ENCODE measurements at regions of chr2 and their contacts with region 1.

Region 1: DNA sequence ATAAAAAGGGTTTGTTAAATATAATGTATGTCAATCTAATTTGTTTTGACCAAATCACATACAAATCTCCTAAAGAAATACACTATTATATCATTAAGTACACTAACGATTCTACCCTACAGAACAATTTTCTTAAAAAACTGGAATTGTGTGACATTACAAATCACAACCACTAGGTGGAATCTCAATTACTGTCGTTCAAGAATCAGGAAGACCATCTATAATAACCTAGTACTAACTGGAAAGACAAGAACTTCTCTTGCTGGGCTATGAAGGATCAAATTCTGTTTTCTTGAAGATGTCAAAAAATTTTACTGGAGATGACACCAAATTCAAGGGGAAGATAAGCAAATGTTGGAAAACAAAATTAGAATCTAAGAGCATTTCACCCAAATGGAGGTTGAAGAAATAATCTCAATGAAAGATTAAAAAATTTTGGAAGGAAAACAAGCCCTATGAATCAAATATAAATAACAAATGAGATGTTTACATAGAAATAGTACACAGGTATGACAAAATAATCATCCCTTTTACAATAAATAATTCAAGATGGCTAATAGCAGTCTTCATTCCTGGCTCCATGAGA is 110.9 kb downstream of the STK39 start:
- DNase-seq: peak; percentile 46
- ATAC-seq: no peak
- H3K4me3 ChIP-seq: no peak overlapping the region
- H3K4me3 Mint-ChIP-seq: no peak overlapping the region
- H3K27ac ChIP-seq: no peak overlapping the region
- H3K27ac Mint-ChIP-seq: no peak overlapping the region
- H3K4me1 ChIP-seq: peaks cover 0 to 5% of the 10 kb centered on the region in 2 donors
- H3K4me1 Mint-ChIP-seq: peaks cover 21% of the 10 kb centered on the region
- H3K27me3 ChIP-seq: no peaks in the 10 kb centered on the region
- H3K27me3 Mint-ChIP-seq: no peaks in the 10 kb centered on the region
- CTCF ChIP-seq: peak; percentile 73

Region 2: DNA sequence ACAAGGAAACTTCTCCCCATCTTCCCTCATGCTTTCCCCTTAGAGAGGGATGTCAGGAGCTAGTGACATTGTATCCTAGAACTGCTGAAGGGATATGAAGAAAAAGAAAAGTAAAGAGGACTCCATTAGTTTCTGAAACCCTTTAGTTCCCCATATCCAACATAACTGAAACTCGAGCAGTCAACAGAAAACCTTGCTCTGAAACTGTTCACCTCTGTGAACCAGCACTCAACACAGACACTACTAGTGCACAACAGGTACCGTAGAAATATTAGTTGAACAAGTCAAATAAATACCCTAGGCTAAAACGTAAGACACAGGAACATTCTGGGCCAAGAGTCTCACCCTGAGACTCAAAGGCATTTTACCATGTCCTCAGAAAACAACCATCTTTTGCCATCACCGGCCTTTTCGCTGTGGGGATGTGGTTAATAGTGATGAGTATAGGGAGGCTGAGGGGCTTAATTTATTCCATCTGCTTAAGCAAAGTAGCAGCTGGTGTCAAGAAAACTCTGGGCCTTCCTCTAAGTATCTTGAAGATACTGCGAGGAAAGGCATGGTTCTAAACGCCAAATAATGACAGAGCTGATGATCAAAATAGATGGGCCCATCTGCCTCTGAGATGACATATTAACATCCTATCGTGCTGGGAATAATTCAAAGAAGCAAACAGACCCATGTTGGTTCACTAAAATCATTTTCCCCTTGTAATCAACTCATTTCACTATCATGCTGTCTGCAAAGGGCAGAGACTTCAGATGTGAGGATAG is 45.9 kb before region 1 on chr2:
- CTCF ChIA-PET with region 1: no interaction called
- POLR2A ChIA-PET with region 1: no interaction called
- intact Hi-C with region 1: no loop called
- DNase-seq: peak; percentile 23
- ATAC-seq: peak; percentile 33
- H3K4me3 ChIP-seq: no peak overlapping the region
- H3K4me3 Mint-ChIP-seq: peak overlapping the region; percentile 52
- H3K27ac ChIP-seq: peak overlapping the region in 1 of 2 donors; percentile 60
- H3K27ac Mint-ChIP-seq: peak overlapping the region; percentile 82
- H3K4me1 ChIP-seq: peaks cover 20 to 26% of the 10 kb centered on the region in 2 donors
- H3K4me1 Mint-ChIP-seq: peaks cover 27% of the 10 kb centered on the region
- H3K27me3 ChIP-seq: no peaks in the 10 kb centered on the region
- H3K27me3 Mint-ChIP-seq: no peaks in the 10 kb centered on the region
- CTCF ChIP-seq: no peak

Region 3: GRCh38 chr2:168246483-168247340 is 110.2 kb after region 1 on chr2:
- CTCF ChIA-PET with region 1: no interaction called
- POLR2A ChIA-PET with region 1: no interaction called
- intact Hi-C with region 1: loop called (anchors 2 kb)
- DNase-seq: peak; percentile 83
- ATAC-seq: peak; percentile 49
- H3K4me3 ChIP-seq: peak overlapping the region; percentile 2 to 74 (median 68)
- H3K4me3 Mint-ChIP-seq: peak overlapping the region; percentile 93
- H3K27ac ChIP-seq: peak overlapping the region; percentile 23 to 70
- H3K27ac Mint-ChIP-seq: peak overlapping the region; percentile 93
- H3K4me1 ChIP-seq: peaks cover 7 to 23% of the 10 kb centered on the region in 2 donors
- H3K4me1 Mint-ChIP-seq: peaks cover 31% of the 10 kb centered on the region
- H3K27me3 ChIP-seq: no peaks in the 10 kb centered on the region
- H3K27me3 Mint-ChIP-seq: no peaks in the 10 kb centered on the region
- CTCF ChIP-seq: peak; percentile 28

Region 4: DNA sequence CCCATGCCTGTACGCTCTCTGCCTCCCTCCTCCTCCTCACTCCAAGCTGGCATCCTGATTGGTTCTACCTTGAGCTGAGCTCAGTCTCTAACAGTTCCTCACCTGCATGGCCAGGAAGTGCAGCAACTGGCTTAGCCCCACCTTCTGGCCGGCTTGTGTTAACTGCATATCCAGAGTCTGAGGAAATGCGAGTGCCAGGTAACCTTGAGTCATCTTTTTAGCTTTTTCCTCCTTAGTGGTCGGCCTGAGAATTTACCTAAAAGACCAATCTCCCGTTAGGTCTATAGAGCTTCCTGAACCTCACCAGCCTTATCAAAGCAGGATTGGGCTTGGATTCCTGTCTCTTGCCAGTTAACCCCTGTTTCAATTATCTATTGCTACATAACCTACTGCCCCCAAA is 200.4 kb after region 1 on chr2:
- CTCF ChIA-PET with region 1: interaction called, 9 read pairs
- POLR2A ChIA-PET with region 1: no interaction called
- intact Hi-C with region 1: loop called (anchors 2 kb)
- DNase-seq: peak; percentile 39
- ATAC-seq: peak; percentile 68
- H3K4me3 ChIP-seq: no peak overlapping the region
- H3K4me3 Mint-ChIP-seq: no peak overlapping the region
- H3K27ac ChIP-seq: no peak overlapping the region
- H3K27ac Mint-ChIP-seq: no peak overlapping the region
- H3K4me1 ChIP-seq: no peaks in the 10 kb centered on the region
- H3K4me1 Mint-ChIP-seq: peaks cover 3% of the 10 kb centered on the region
- H3K27me3 ChIP-seq: no peaks in the 10 kb centered on the region
- H3K27me3 Mint-ChIP-seq: peaks cover 10% of the 10 kb centered on the region
- CTCF ChIP-seq: peak; percentile 33

Region 5: GRCh38 chr2:168758970-168759820 is 622.7 kb after region 1 on chr2:
- CTCF ChIA-PET with region 1: no interaction called
- POLR2A ChIA-PET with region 1: no interaction called
- intact Hi-C with region 1: loop called (anchors 2 kb)
- DNase-seq: peak; percentile 55
- ATAC-seq: peak; percentile 41
- H3K4me3 ChIP-seq: no peak overlapping the region
- H3K4me3 Mint-ChIP-seq: no peak overlapping the region
- H3K27ac ChIP-seq: no peak overlapping the region
- H3K27ac Mint-ChIP-seq: no peak overlapping the region
- H3K4me1 ChIP-seq: no peaks in the 10 kb centered on the region
- H3K4me1 Mint-ChIP-seq: peaks cover 4% of the 10 kb centered on the region
- H3K27me3 ChIP-seq: no peaks in the 10 kb centered on the region
- H3K27me3 Mint-ChIP-seq: no peaks in the 10 kb centered on the region
- CTCF ChIP-seq: peak; percentile 61

Region 6: GRCh38 chr2:168920504-168921157 is 784.1 kb after region 1 on chr2:
- CTCF ChIA-PET with region 1: no interaction called
- POLR2A ChIA-PET with region 1: no interaction called
- intact Hi-C with region 1: loop called (anchors 5 kb)
- DNase-seq: peak; percentile 47
- ATAC-seq: no peak
- H3K4me3 ChIP-seq: no peak overlapping the region
- H3K4me3 Mint-ChIP-seq: no peak overlapping the region
- H3K27ac ChIP-seq: no peak overlapping the region
- H3K27ac Mint-ChIP-seq: no peak overlapping the region
- H3K4me1 ChIP-seq: no peaks in the 10 kb centered on the region
- H3K4me1 Mint-ChIP-seq: no peaks in the 10 kb centered on the region
- H3K27me3 ChIP-seq: no peaks in the 10 kb centered on the region
- H3K27me3 Mint-ChIP-seq: peaks cover 16% of the 10 kb centered on the region
- CTCF ChIP-seq: peak; percentile 86